Breast epithelium (tissue), 4 donors: ENCODE measurements at regions of chr14 and their contacts with region 1.

Region 1: DNA sequence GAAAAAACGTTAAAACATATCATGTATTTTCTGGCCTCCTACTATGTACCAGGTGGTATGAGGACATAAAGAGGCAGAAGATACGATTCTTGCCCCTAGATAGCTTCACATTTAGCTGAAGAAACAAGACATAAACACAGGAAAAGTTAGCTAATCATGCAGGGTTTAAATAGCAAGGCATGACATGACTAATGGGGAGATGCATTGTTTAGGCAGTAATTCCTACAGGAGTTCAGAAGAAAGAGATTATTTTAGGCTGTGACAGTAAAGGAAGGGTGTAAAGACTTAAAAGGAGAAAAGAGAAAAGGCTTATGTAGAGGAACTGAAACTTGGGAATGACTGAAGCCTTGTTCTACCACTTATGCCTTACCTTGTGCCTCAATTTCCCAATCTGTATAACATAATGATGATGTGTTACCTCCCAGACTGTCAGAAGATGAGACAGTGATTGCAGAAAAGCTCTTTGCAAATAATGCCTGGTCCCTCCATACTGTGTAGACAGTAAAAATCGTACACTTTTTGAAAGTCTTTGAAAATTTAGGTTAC is 44.4 kb downstream of the PRKCH start:
- DNase-seq: no peak
- H3K4me3 ChIP-seq: no peak overlapping the region
- H3K27ac ChIP-seq: no peak overlapping the region
- H3K4me1 ChIP-seq: peaks cover 0 to 7% of the 10 kb centered on the region in 2 donors
- H3K27me3 ChIP-seq: no peaks in the 10 kb centered on the region
- CTCF ChIP-seq: no peak
- POLR2A ChIP-seq: no peak

Region 2: GRCh38 chr14:61426048-61426447 is 60.3 kb after region 1 on chr14:
- intact Hi-C with region 1: loop called (anchors 2 kb)
- DNase-seq: peak in 1 of 2 donors; percentile 86
- H3K4me3 ChIP-seq: no peak overlapping the region
- H3K27ac ChIP-seq: peak overlapping the region; percentile 80 to 81
- H3K4me1 ChIP-seq: no peaks in the 10 kb centered on the region
- H3K27me3 ChIP-seq: no peaks in the 10 kb centered on the region
- CTCF ChIP-seq: no peak
- POLR2A ChIP-seq: no peak

Region 3: DNA sequence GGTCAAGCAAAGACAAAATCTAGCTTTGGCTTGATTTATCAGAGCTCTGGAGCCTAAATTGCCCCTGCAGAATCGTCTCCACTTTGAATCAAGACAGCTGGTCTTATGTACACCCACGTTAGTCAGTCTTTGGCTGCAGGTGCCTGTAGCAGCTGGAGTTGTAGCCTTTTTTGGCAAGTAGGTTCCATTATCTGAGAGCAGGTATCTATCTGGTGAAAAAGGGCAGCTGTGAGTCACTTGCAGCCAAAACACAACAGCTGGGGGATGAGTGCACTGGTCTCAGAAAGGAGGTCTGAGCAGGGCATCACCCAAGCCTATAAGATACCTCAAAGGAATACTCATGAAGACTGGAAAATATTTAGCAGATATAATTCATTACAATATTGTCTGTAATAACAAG is 1723.1 kb after region 1 on chr14:
- intact Hi-C with region 1: no loop called
- DNase-seq: no peak
- H3K4me3 ChIP-seq: no peak overlapping the region
- H3K27ac ChIP-seq: no peak overlapping the region
- H3K4me1 ChIP-seq: no peaks in the 10 kb centered on the region
- H3K27me3 ChIP-seq: no peaks in the 10 kb centered on the region
- CTCF ChIP-seq: no peak
- POLR2A ChIP-seq: no peak